CD4-positive, alpha-beta memory T cell (primary cell): ENCODE measurements at regions of chr14 and their contacts with region 1.

Region 1: DNA sequence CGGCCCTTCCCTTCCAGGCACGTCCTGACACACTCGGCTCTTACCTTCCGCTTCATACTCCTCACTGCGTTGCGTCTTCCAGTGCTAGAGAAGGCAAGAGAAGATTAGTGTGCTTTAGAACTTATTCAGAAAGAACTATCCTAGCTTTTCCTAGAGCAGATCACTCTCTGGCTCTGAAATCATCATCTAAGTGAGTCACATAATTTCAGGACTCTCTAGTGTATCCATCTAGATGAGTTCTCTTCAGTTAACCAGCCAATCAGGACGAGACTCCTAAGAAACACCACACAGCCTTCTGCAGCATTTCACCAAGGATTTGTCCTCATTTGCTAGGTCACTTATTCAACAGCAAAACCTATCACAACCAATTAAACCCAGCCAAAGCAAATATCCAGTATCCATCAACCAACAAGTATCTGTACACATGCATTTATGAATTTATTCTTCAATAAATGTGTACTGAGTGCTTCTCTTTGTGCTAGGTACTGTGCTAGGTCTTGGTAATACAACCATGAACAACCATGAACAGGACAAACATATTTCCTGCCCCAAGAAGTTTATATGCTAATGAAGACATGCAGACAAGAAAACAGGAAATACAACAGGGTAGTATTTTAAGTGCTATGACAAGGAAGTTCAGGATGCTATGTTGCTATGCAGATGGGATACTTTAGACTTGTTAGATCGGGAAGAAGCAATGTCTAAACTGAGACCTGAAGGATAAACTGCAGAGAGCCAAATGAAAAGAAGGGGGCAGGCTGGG is 52.1 kb downstream of the NIN start:
- DNase-seq: no peak
- H3K4me3 ChIP-seq: no peak overlapping the region
- H3K4me3 Mint-ChIP-seq: peak overlapping the region in 4 of 8 donors; percentile 7 to 77 (median 46)
- H3K27ac ChIP-seq: no peak overlapping the region
- H3K27ac Mint-ChIP-seq: peak overlapping the region; percentile 6 to 93 (median 82)
- H3K4me1 ChIP-seq: peaks cover 47% of the 10 kb centered on the region
- H3K4me1 Mint-ChIP-seq: peaks cover 34 to 73% (median 45%) of the 10 kb centered on the region in 4 donors
- H3K27me3 ChIP-seq: no peaks in the 10 kb centered on the region
- H3K27me3 Mint-ChIP-seq: no peaks in the 10 kb centered on the region

Region 2: DNA sequence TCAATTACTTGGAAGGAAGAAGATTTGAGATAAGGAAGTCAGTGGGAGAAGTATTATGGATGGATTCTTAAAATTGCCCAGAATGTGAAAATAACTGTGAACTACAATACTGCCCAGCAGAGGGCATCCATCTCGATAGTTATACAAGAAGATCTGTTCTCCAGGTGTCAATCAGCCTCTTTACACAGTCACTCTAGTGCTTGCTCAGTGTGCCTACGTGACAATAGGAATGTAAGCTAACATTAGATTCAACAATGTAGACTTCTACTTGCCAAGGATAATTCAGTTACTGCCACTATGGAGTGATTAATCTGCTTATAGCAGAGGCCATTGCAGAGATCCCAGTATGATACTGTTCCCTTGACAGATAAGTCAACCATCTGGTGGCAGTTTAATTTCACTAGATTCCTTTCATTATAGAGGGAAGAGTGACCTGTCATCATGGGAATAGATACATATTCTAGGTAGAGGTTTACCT is 235.9 kb before region 1 on chr14:
- CTCF ChIA-PET with region 1: interaction called, 37 read pairs
- POLR2A ChIA-PET with region 1: interaction called, 3 read pairs
- intact Hi-C with region 1: loop called (anchors 1 kb)
- DNase-seq: peak; percentile 43 to 52 (median 49)
- H3K4me3 ChIP-seq: no peak overlapping the region
- H3K4me3 Mint-ChIP-seq: no peak overlapping the region
- H3K27ac ChIP-seq: no peak overlapping the region
- H3K27ac Mint-ChIP-seq: no peak overlapping the region
- H3K4me1 ChIP-seq: peaks cover 7% of the 10 kb centered on the region
- H3K4me1 Mint-ChIP-seq: peaks cover 9 to 15% (median 12%) of the 10 kb centered on the region in 4 donors
- H3K27me3 ChIP-seq: no peaks in the 10 kb centered on the region
- H3K27me3 Mint-ChIP-seq: peaks cover 2 to 8% of the 10 kb centered on the region in 2 donors

Region 3: DNA sequence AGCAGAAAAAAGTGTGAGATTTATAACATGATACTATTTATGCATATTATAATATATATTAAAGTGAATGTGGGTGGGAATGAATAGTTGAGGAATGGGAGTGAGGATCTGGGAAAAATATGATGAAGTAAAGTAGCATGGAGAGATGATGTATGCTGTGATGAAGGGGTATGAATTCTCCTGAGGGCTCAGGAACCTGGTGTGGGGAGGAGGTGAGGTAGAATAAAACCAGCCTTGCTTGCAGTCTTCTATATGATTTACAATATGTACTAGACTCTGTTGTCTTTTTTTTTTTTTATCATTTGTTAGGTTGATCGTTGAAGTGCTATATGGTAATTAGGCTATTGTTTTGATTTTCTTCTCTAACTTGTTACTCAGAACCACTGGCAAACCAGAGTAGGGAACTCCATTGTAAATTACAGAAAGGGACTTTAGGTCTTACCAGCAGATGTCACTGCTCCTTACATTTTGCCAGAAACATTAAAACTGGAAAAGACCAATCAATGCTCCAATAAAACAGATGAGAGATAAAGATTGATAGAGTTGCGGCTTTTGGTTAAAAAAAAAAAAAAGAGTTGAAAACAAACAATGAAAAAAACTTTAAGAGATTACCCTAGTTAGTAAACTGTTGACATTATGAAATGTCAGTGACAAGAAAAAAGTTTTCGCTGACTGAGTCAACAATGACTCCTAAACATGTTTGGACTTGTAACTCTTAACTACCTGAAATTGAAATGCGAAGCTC is 179.0 kb before region 1 on chr14:
- CTCF ChIA-PET with region 1: interaction called, 30 read pairs
- POLR2A ChIA-PET with region 1: no interaction called
- intact Hi-C with region 1: loop called (anchors 1 kb)
- DNase-seq: peak in 4 of 5 donors; percentile 1 to 14 (median 8)
- H3K4me3 ChIP-seq: no peak overlapping the region
- H3K4me3 Mint-ChIP-seq: no peak overlapping the region
- H3K27ac ChIP-seq: no peak overlapping the region
- H3K27ac Mint-ChIP-seq: no peak overlapping the region
- H3K4me1 ChIP-seq: no peaks in the 10 kb centered on the region
- H3K4me1 Mint-ChIP-seq: no peaks in the 10 kb centered on the region
- H3K27me3 ChIP-seq: no peaks in the 10 kb centered on the region
- H3K27me3 Mint-ChIP-seq: peaks cover 0 to 1% of the 10 kb centered on the region in 2 donors

Region 4: GRCh38 chr14:50762001-50762930 is 16.6 kb before region 1 on chr14:
- CTCF ChIA-PET with region 1: interaction called, 66 read pairs
- POLR2A ChIA-PET with region 1: no interaction called
- intact Hi-C with region 1: no loop called
- DNase-seq: no peak
- H3K4me3 ChIP-seq: no peak overlapping the region
- H3K4me3 Mint-ChIP-seq: no peak overlapping the region
- H3K27ac ChIP-seq: no peak overlapping the region
- H3K27ac Mint-ChIP-seq: peak overlapping the region in 1 of 7 donors; percentile 69
- H3K4me1 ChIP-seq: no peaks in the 10 kb centered on the region
- H3K4me1 Mint-ChIP-seq: peaks cover 0 to 4% (median 2%) of the 10 kb centered on the region in 4 donors
- H3K27me3 ChIP-seq: no peaks in the 10 kb centered on the region
- H3K27me3 Mint-ChIP-seq: no peaks in the 10 kb centered on the region

Region 5: GRCh38 chr14:50813544-50813863 is 34.6 kb after region 1 on chr14:
- CTCF ChIA-PET with region 1: interaction called, 17 read pairs
- POLR2A ChIA-PET with region 1: no interaction called
- intact Hi-C with region 1: loop called (anchors 2 kb)
- DNase-seq: peak; percentile 50 to 64 (median 58)
- H3K4me3 ChIP-seq: no peak overlapping the region
- H3K4me3 Mint-ChIP-seq: peak overlapping the region; percentile 77 to 92 (median 86)
- H3K27ac ChIP-seq: no peak overlapping the region
- H3K27ac Mint-ChIP-seq: peak overlapping the region; percentile 70 to 95 (median 86)
- H3K4me1 ChIP-seq: peaks cover 37% of the 10 kb centered on the region
- H3K4me1 Mint-ChIP-seq: peaks cover 40 to 69% (median 53%) of the 10 kb centered on the region in 4 donors
- H3K27me3 ChIP-seq: no peaks in the 10 kb centered on the region
- H3K27me3 Mint-ChIP-seq: no peaks in the 10 kb centered on the region